ENCODE measurements at regions of chr7 and their contacts with region 1.

Region 1: GRCh38 chr7:65722345-65722792 is 150.5 kb upstream of the VKORC1L1 start:
- DNase-seq: peak; percentile 7
- ATAC-seq: peak; percentile 89
- H3K4me3 ChIP-seq: no peak overlapping the region
- H3K27ac ChIP-seq: no peak overlapping the region
- H3K4me1 ChIP-seq: no peaks in the 10 kb centered on the region
- H3K27me3 ChIP-seq: no peaks in the 10 kb centered on the region
- CTCF ChIP-seq: peak; percentile 81 to 85 (median 81)
- EP300 ChIP-seq: no peak
- POLR2A ChIP-seq: no peak
- RAD21 ChIP-seq: peak; percentile 95

Region 2: GRCh38 chr7:65354263-65354662 is 368.1 kb before region 1 on chr7:
- CTCF ChIA-PET with region 1: no interaction called
- POLR2A ChIA-PET with region 1: no interaction called
- RAD21 ChIA-PET with region 1: no interaction called
- SMC1A ChIA-PET with region 1: no interaction called
- in situ Hi-C with region 1: no loop called
- intact Hi-C with region 1: no loop called
- DNase-seq: no peak
- ATAC-seq: no peak
- H3K4me3 ChIP-seq: no peak overlapping the region
- H3K27ac ChIP-seq: no peak overlapping the region
- H3K4me1 ChIP-seq: no peaks in the 10 kb centered on the region
- H3K27me3 ChIP-seq: no peaks in the 10 kb centered on the region
- CTCF ChIP-seq: no peak
- EP300 ChIP-seq: no peak
- POLR2A ChIP-seq: no peak
- RAD21 ChIP-seq: no peak

Region 3: DNA sequence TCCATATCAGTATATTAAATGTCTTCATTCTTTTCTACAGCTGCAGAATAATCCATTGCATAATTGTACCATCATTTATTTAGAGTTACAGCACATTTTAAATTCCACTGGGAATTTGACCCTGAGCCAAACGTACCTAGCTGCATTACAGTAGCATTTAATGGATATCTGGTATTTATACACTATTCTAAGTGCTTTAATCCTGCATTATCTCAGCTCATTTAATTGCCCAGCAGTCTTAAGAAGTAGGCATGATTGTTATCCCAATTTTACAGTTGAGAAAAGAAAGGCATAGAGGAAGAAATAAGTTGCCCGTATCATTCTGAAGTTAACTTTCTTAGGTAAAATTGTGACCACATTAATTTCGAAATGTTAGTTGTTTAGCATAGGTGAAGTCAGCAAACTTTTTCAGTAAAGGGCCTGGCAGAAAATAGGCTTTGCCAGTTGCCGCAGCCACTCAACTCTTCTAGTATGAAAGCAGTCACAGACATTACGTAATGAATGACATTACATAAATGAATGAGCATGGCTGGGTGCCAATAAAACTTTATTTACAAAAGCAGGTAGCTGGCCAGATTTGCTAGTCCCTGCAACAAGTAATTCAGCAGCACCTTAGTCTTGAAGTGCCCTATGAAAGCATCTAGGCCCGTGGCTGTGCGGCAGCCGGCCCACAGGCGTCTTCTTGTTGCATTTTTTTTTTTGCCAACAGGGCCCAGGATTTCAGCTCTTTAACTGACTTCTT is 229.6 kb after region 1 on chr7:
- CTCF ChIA-PET with region 1: no interaction called
- POLR2A ChIA-PET with region 1: no interaction called
- RAD21 ChIA-PET with region 1: no interaction called
- SMC1A ChIA-PET with region 1: no interaction called
- in situ Hi-C with region 1: no loop called
- intact Hi-C with region 1: loop called (anchors 10 kb)
- DNase-seq: no peak
- ATAC-seq: no peak
- H3K4me3 ChIP-seq: no peak overlapping the region
- H3K27ac ChIP-seq: no peak overlapping the region
- H3K4me1 ChIP-seq: no peaks in the 10 kb centered on the region
- H3K27me3 ChIP-seq: no peaks in the 10 kb centered on the region
- CTCF ChIP-seq: no peak
- EP300 ChIP-seq: no peak
- POLR2A ChIP-seq: no peak
- RAD21 ChIP-seq: no peak

Measured in GM12878 (cell line).